ENCODE measurements at regions of chr13 and their contacts with region 1.

Region 1: DNA sequence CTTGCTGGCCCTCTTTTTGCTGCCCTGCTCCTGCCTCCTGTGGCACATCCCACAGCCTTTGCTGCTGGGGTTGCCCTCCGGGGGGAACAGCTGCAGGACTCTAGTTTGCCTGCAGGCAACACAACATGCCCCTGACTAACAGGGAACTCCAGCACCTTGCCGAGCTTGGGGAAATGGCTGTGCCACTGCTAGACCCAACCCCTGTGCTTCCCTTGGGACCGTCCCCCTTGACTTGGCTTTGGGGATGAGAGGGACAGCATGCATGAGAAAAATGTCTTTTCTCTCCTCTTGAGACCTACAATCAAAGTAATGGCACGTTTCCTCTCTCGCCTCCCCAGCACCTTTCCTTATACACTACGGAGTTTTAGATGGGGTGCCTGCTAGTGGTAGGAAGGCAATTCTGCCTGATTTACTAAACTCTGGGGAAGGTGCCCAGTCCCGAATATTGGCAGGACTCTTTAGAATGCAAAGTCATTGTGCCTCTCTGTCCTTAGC is 12.4 kb upstream of the VWA8 start:
- DNase-seq: no peak
- H3K4me3 Mint-ChIP-seq: no peak overlapping the region
- H3K27ac Mint-ChIP-seq: no peak overlapping the region
- H3K4me1 Mint-ChIP-seq: peaks cover 30% of the 10 kb centered on the region
- H3K27me3 Mint-ChIP-seq: peaks cover 9% of the 10 kb centered on the region

Region 2: DNA sequence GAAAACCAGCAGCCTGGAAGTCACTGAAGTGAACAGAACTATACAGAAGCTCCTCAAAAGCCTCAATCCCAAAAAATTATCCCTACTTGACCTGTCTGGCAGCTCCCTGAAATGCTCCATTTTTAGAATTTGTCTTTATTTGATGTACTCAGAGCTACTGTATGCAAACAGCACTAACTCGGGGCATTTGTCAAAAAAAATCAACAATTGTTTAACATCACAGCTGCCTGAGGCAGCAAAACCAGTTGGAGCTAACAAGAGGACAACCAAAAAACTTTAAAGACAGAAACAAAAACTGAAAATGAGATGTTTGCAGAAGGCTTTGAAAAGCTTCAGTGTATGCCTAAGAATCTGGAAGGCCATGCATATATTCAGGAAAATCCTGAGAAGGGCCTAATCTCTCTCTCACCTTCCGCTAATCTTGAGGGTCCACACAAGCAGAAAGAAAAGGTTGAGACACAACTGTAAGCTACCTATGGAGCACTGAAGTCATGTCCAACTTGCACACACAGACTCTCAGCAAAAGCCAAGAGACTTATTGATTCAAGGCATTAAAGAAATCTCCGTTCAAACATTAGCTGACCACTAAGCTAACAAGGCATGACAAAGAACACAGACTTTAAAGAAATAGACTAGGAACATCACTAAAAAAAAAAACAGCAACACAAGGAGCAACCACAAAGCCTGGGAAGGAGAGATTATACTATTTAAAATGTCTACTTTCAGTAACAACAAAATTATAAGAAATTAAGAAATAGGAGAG is 28.5 kb before region 1 on chr13:
- CTCF ChIA-PET with region 1: no interaction called
- DNase-seq: no peak
- H3K4me3 Mint-ChIP-seq: no peak overlapping the region
- H3K27ac Mint-ChIP-seq: no peak overlapping the region
- H3K4me1 Mint-ChIP-seq: peaks cover 3% of the 10 kb centered on the region
- H3K27me3 Mint-ChIP-seq: no peaks in the 10 kb centered on the region

Region 3: DNA sequence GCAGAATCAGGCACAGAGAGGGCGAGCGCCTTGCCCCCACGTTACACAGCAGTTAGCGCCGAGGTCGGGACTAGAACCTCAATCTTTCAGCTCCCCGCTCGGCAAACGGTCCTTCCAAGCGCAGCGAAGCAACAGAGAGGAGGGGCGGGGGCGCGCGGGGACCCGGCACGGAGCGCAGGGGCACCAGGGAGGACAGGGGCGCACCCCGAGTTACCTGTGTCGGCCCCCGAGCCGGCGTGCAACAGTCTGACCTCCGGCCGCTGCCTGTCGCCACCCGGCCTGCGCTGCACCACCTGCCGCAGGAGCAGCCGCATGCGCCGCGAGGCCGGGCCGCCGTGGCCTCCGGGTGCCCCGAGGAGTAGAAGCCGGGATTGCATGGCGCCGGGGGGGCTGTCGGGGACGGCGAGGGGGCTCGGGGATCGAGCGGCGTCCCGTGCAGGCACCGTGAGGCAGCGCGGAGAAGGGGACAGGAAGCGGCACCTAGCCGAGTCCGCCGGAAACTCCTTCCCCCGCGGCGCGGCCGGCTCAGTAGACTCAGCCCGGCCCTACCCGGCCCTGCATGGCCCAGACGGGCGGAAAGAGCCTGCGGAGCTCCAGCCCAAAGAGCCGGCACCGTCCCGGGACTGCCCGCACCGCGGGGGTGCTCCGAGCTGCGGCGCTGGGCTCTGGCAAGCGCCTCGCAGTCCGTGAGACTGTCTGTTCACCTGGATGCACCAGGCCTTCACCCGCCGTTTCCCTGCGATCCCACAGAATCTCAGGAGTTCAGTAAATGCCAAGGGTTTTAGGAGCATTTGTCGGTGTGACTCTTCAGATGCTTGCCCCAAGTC is 12.4 kb before region 1 on chr13 and contains the start of gene VWA8:
- CTCF ChIA-PET with region 1: interaction called, 11 read pairs
- DNase-seq: peak; percentile 89
- H3K4me3 Mint-ChIP-seq: peak within 1 kb of the TSS; percentile 93
- H3K27ac Mint-ChIP-seq: peak within 1 kb of the TSS; percentile 87
- H3K4me1 Mint-ChIP-seq: peaks cover 31% of the 10 kb centered on the region
- H3K27me3 Mint-ChIP-seq: no peaks in the 10 kb centered on the region

Region 4: GRCh38 chr13:41995946-41996345 is 22.7 kb after region 1 on chr13:
- CTCF ChIA-PET with region 1: no interaction called
- DNase-seq: no peak
- H3K4me3 Mint-ChIP-seq: no peak overlapping the region
- H3K27ac Mint-ChIP-seq: no peak overlapping the region
- H3K4me1 Mint-ChIP-seq: no peaks in the 10 kb centered on the region
- H3K27me3 Mint-ChIP-seq: peaks cover 22% of the 10 kb centered on the region